Left cardiac atrium (tissue), 4 donors: ENCODE measurements at regions of chr2 and their contacts with region 1.

Region 1: DNA sequence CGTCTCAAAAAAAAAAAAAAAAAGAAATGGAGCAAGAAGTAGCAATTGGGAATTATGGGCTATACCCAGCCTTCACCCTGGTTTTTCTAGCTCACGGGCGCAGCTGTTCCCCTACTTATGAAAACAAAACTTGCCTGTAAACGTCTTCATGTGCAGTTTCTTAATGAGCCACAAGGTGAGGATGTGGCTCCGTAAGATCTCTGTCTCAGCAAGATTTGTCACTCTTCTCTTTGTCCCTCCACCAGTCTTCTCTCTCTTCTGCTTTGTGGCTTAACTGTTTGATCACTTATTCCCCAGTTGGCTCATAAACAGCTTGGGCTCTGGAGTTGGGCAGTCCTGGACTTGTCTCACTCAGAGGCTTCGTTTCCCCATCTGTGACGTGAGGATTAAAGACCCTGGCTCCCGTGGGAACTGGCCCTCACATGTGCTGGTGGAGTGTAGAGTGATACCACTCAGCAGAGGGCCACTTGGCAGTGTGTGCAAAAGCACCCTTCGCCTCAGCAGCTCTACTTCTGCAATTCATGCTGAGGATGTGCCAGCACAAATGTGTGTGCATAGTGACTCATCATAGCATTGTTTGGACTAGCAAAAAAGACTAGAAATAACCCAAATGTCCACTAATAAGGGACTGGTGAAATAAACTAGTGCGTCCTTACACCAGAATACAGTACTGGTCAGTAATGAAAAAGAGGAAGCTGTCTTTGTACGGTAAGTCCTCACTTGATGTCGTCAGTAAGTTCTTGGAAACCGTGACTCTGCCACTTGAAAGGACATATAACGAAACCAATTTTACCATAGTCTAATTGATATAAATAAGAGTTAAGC is 8.7 kb downstream of the CEP68 start:
- DNase-seq: peak; percentile 80
- ATAC-seq: peak; percentile 85 to 88

Region 2: DNA sequence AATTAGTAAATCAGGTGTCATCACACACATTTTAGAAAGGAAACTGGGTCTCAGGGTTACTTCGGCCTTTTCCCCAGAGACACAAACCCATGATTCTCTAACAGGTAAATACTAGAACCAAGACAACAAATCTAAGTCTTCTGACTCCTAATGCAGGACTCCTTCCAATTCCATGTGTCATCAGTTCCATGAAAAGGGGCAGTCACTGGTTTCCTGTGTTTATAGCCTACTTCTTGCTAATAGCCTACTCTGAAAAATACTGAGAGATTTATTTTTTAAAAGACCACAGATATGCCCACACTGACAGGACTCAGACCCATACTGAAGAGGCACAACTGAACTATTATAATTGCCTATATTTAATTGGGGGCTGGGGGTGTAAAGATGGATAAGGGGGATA is 32.0 kb after region 1 on chr2:
- intact Hi-C with region 1: no loop called
- DNase-seq: no peak
- ATAC-seq: no peak

Region 3: GRCh38 chr2:65129826-65130663 is 65.1 kb after region 1 on chr2 and contains the start of gene RAB1A:
- intact Hi-C with region 1: loop called in 1 of 2 experiments (anchors 5 kb)
- DNase-seq: peak; percentile 100
- ATAC-seq: peak; percentile 97
- total RNA-seq, gene RAB1A: 118 to 163 TPM

Region 4: DNA sequence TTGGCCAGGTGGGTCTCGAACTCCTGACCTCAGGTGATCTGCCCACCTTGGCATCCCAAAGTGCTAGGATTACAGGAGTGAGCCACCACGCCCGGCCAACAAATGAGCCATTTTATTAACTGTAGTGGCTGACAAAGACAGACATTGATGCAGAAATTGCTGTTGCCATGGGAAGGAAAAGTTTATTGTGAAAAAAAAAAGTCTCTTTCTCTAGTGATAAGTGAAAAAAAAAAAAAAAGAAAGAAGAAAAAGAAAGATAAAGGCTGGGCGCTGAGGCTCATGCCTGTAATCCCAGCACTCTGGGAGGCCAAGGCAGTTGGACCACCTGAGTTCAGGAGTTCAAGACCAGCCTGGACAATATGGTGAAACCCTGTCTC is 104.8 kb after region 1 on chr2:
- intact Hi-C with region 1: loop called in 1 of 2 experiments (anchors 5 kb)
- DNase-seq: no peak
- ATAC-seq: no peak

Region 5: DNA sequence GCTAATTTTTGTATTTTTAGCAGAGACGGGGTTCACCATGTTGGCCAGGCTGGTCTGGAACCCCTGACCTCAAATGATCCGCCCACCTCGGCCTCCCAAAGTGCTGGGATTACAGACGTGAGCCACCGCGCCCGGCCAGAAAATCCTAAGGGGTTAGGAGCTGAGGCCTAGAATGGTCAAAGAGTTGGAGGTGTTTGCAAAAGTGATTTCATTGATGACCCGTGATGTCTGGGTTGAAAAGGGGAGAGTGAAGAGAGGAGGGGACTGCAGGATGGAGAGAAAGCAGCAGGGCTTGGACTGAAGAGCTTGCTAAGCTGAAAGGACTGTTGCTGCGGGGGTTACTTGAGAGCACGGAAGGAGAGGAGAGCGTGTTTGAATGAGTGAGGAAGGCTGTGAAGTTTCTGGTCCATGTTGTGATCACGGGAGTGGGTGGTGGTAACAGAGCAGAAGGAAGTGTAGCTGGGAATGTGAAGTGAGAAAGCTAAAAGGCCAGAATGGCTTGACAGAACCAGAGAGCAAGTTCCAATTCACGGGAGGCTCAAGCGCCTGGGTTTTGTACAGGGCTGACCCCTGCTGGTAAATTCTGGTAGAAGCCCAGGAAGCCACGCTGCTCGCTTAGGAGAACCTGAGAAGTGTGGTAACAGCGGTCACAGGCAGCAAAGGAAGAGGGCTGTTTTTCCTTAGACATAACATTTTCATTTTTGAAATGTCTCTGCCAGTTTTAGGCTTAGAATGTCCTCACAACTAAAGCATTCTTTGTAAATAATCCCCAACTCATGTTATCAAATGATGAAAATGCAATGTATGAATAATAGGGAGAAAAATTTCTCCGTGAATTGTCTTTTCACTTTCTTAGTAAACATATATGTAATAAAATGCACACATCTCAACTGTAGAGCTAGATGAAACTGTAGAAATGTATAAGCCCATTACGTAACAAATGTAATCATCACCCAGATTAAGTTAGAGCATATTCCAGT is 122.2 kb after region 1 on chr2:
- intact Hi-C with region 1: loop called (anchors 5 kb)
- DNase-seq: peak; percentile 74
- ATAC-seq: peak; percentile 97